Activated CD4-positive, alpha-beta memory T cell treated with anti-CD3 and anti-CD28 coated beads for 36 hours (primary cell): ENCODE measurements at regions of chr9 and their contacts with region 1.

Region 1: GRCh38 chr9:120916588-120916987 is 10.0 kb downstream of the TRAF1 start:
- DNase-seq: no peak
- H3K4me3 Mint-ChIP-seq: peak overlapping the region; percentile 51
- H3K27ac Mint-ChIP-seq: peak overlapping the region; percentile 79
- H3K4me1 Mint-ChIP-seq: peaks cover 87% of the 10 kb centered on the region
- H3K27me3 Mint-ChIP-seq: no peaks in the 10 kb centered on the region

Region 2: DNA sequence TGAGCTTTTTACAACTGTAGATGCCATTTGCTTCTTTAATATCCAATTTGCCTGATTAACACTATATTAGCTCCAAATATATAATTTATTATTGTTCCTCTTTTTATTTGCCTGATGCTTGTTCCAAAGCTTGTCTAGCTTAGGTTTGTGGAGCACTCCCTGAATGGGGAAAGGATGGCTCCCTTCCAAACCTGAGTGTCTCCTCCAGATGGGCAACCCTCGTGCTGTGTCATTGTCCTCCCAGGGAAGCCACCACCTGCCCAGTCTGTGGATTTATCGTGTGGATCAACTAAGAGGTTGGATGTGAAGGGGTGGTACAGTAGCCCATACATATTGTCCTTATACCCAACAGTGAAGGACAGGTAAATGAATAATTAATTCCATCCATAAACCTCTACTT is 741.6 kb before region 1 on chr9:
- CTCF ChIA-PET with region 1: no interaction called
- POLR2A ChIA-PET with region 1: no interaction called
- intact Hi-C with region 1: no loop called
- DNase-seq: no peak
- H3K4me3 Mint-ChIP-seq: no peak overlapping the region
- H3K27ac Mint-ChIP-seq: no peak overlapping the region
- H3K4me1 Mint-ChIP-seq: no peaks in the 10 kb centered on the region
- H3K27me3 Mint-ChIP-seq: no peaks in the 10 kb centered on the region

Region 3: DNA sequence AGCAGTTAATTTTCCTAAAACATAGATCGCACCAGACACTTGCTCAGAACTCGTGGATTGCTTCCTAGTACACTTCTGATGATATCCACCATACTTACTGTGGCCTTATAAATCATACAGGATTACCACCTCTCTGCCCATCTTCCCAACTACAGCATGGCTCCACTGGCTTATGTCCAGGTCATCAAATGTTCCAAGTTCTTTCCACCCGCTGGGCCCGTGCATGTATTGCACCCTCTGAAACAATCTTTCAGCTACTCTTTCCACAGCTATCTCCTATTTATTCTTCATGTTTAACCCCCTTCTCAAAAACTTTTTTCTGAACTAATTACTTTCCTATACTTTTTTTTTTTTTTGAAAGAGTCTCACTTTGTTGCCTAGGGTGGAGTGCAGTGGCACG is 141.9 kb before region 1 on chr9:
- CTCF ChIA-PET with region 1: no interaction called
- POLR2A ChIA-PET with region 1: no interaction called
- intact Hi-C with region 1: no loop called
- DNase-seq: no peak
- H3K4me3 Mint-ChIP-seq: no peak overlapping the region
- H3K27ac Mint-ChIP-seq: no peak overlapping the region
- H3K4me1 Mint-ChIP-seq: peaks cover 14% of the 10 kb centered on the region
- H3K27me3 Mint-ChIP-seq: no peaks in the 10 kb centered on the region

Region 4: DNA sequence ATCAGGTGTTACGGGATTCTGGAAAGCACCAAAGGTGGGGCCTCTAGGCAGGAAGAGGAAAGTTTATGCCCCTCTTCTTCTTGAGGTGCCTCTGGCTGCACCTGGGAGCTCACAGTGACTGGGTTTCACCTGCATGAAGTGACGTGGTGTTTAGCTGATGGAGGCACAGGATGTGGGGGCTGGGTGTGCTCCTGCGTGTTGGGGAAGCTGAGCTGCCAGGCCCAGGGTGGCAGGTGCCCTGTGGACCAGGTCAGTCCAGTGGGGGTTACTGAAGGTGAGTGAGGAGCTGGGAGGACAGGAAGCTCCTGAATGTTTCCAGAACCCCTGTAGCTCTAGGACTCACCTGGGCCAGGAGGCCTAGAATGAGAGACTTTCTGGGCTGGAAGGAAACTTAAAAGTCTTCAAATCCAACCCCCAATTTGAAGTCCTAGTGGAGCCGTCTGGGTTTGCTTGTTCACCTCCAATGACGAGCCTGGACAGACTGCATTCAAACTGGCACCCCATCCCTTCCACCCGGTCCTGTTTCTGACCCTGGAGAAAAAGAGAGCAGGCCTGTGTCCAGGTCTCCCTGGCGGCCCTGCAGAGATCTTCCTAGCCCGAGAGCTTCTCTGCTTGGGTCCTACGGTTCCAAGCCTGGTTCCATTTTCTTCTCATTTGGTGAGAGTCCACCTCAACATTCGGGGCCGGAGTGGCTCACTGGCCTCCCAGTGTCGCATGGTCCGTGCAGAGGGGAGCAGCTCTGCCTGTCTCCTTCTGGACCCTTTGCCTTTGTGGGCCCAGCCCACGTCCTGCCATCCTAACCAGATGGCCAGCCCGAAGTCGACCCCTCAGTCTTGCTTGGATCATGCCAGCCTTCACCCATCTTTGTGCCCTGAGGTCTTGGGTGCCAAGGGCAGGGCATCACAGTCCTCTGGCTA is 12.3 kb before region 1 on chr9:
- CTCF ChIA-PET with region 1: interaction called, 5 read pairs
- POLR2A ChIA-PET with region 1: interaction called, 237 read pairs
- intact Hi-C with region 1: no loop called
- DNase-seq: peak; percentile 68
- H3K4me3 Mint-ChIP-seq: peak overlapping the region; percentile 20
- H3K27ac Mint-ChIP-seq: peak overlapping the region; percentile 91
- H3K4me1 Mint-ChIP-seq: peaks cover 85% of the 10 kb centered on the region
- H3K27me3 Mint-ChIP-seq: no peaks in the 10 kb centered on the region